Activated CD8-positive, alpha-beta T cell treated with anti-CD3 and anti-CD28 coated beads for 36 hours (primary cell): ENCODE measurements at regions of chr10 and their contacts with region 1.

Region 1: DNA sequence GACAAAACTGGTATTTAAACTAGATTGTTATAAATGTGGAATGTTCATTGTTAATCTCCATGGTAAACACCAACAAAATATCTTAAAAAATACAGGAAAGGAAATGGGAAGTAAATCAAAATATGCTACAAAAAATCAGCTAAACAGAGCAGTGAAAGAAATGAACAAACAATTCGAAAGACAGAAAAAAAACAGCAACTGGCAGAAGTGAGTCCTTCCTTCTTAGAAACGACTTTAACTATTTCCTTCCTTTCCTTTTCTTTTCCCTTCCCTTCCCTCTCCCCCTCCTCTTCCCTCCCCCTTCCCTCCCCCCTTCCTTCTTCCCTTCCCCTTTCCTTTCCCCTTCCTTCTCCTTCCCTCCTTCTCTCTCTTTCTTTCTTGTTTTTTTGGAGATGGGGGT is 12.8 kb downstream of the ZNF248 start:
- DNase-seq: no peak
- ATAC-seq: no peak
- H3K4me3 Mint-ChIP-seq: no peak overlapping the region
- H3K27ac Mint-ChIP-seq: no peak overlapping the region
- H3K4me1 Mint-ChIP-seq: peaks cover 4% of the 10 kb centered on the region
- H3K27me3 Mint-ChIP-seq: no peaks in the 10 kb centered on the region
- CTCF ChIP-seq: no peak

Region 2: GRCh38 chr10:37789590-37789989 is 55.1 kb before region 1 on chr10:
- CTCF ChIA-PET with region 1: no interaction called
- POLR2A ChIA-PET with region 1: no interaction called
- intact Hi-C with region 1: loop called (anchors 10 kb)
- DNase-seq: no peak
- ATAC-seq: no peak
- H3K4me3 Mint-ChIP-seq: no peak overlapping the region
- H3K27ac Mint-ChIP-seq: no peak overlapping the region
- H3K4me1 Mint-ChIP-seq: no peaks in the 10 kb centered on the region
- H3K27me3 Mint-ChIP-seq: no peaks in the 10 kb centered on the region
- CTCF ChIP-seq: no peak

Region 3: GRCh38 chr10:37831495-37832333 is 12.9 kb before region 1 on chr10:
- CTCF ChIA-PET with region 1: no interaction called
- POLR2A ChIA-PET with region 1: no interaction called
- intact Hi-C with region 1: no loop called
- DNase-seq: no peak
- ATAC-seq: no peak
- H3K4me3 Mint-ChIP-seq: no peak overlapping the region
- H3K27ac Mint-ChIP-seq: no peak overlapping the region
- H3K4me1 Mint-ChIP-seq: peaks cover 2% of the 10 kb centered on the region
- H3K27me3 Mint-ChIP-seq: no peaks in the 10 kb centered on the region
- CTCF ChIP-seq: no peak